ENCODE measurements at regions of chr6 and their contacts with region 1.

Region 1: DNA sequence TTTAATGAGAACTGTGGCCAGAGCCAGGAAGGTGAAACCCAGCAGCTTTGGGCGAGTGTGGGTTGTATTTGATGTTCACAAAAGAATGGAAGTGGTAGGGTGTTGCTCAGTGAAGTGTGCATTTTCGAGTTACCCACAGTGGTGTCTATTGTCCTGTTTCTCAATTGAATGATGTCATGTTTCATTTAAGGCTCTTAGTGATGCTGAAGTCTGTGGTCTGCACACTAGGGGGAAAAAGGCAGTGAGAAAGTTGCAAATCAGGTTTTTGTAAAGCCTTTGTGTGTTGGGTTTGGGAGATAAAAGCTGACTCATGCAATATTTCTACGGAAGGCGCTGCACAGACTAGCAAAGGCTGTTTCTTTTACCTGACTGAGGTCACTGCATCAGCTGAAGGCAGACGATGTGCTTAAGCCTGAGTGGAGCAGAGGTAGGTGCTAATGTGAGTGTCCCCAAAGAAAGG is 121.1 kb downstream of the PLEKHG1 start:
- H3K4me3 ChIP-seq: peak overlapping the region; percentile 17
- H3K27ac ChIP-seq: peak overlapping the region; percentile 56
- H3K4me1 ChIP-seq: peaks cover 31% of the 10 kb centered on the region
- CTCF ChIP-seq: no peak; the same call in 1 of the 2 replicates

Region 2: DNA sequence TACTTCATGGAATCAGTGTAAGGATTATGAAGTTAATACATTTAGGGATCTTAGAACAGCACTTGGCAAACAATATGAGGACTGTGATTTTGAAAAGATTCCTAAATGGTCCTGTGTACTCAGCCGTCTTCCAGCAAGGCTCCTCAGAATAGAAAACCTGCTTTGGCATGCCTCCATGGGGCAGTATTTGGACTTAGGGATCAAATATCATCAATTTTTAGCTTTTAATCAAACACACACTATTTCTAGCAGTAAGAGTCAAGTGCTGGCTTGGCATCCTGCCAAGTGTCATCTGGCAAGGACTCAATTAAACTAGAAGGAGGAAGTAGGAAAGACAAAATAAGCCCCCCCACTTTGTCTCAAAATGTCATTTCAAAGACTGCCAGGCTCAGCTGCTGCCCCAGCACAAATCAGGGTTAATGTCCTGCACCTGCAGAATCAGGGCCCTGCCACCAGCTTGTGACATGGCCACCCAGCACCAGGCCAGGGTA is 311.2 kb before region 1 on chr6:
- CTCF ChIA-PET with region 1: interaction called, 15 read pairs
- POLR2A ChIA-PET with region 1: no interaction called
- H3K4me3 ChIP-seq: no peak overlapping the region
- H3K27ac ChIP-seq: peak overlapping the region; percentile 44; the same call in 1 of the 2 replicates
- H3K4me1 ChIP-seq: peaks cover 26% of the 10 kb centered on the region
- CTCF ChIP-seq: no peak